ENCODE measurements at regions of chr1 and their contacts with region 1.

Region 1: DNA sequence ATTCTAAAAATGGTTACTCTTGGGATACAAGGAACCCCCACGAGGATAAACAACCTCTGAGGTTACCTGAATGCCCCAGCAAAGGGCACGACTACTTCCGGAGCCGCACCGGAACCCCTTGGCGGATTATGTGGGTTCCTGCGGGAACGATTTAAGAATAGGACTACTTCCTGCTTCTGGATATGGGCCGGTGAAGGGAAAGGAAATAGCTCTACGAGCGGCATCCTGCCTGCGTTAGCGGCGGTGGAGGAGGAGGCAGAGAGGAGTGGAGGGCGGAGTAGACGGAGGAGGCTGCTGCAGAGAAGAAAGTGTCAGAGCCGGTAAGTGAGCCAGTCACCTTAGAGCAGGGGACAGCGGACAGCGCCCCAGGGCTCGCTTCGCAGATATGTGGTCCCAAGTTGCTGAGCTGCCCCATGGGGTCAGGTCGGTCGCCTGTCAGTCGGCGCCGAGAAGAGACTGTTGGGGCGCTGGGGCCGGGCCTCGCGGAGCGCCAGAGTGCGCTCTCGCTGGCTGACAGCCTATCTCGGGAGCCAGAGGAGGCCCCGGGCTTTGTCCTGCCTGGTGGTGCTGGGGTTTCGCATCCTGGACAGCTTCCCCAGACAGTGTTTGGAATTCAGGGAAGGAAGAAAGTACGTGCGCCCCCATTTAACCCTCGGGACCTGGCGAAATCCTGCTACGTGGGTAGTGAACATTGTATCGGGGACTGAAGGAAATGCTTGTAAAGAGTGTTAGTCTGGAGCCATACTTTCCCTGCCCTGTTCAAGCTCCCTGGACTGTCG is at the start of gene KLHL20:
- DNase-seq: peak; percentile 91
- H3K4me3 Mint-ChIP-seq: peak within 1 kb of the TSS; percentile 92
- H3K27ac Mint-ChIP-seq: peak within 1 kb of the TSS; percentile 87
- H3K4me1 Mint-ChIP-seq: peaks cover 9% of the 10 kb centered on the region
- H3K27me3 Mint-ChIP-seq: peaks cover 20% of the 10 kb centered on the region
- CTCF ChIP-seq: no peak
- total RNA-seq, gene KLHL20: 21.6 and 22.2 TPM in 2 replicates

Region 2: GRCh38 chr1:172809750-172810149 is 905.2 kb before region 1 on chr1:
- CTCF ChIA-PET with region 1: no interaction called
- intact Hi-C with region 1: no loop called
- DNase-seq: no peak
- H3K4me3 Mint-ChIP-seq: no peak overlapping the region
- H3K27ac Mint-ChIP-seq: no peak overlapping the region
- H3K4me1 Mint-ChIP-seq: no peaks in the 10 kb centered on the region
- H3K27me3 Mint-ChIP-seq: no peaks in the 10 kb centered on the region
- CTCF ChIP-seq: no peak

Region 3: GRCh38 chr1:173476664-173477285 is 238.2 kb before region 1 on chr1:
- CTCF ChIA-PET with region 1: interaction called, 3 read pairs
- intact Hi-C with region 1: loop called (anchors 5 kb)
- DNase-seq: peak; percentile 91
- H3K4me3 Mint-ChIP-seq: peak overlapping the region; percentile 84
- H3K27ac Mint-ChIP-seq: peak overlapping the region; percentile 63
- H3K4me1 Mint-ChIP-seq: peaks cover 49% of the 10 kb centered on the region
- H3K27me3 Mint-ChIP-seq: no peaks in the 10 kb centered on the region
- CTCF ChIP-seq: no peak

Region 4: GRCh38 chr1:173507205-173507846 is 207.6 kb before region 1 on chr1:
- CTCF ChIA-PET with region 1: interaction called, 3 read pairs
- intact Hi-C with region 1: loop called (anchors 10 kb)
- DNase-seq: peak; percentile 41
- H3K4me3 Mint-ChIP-seq: peak overlapping the region; percentile 37
- H3K27ac Mint-ChIP-seq: peak overlapping the region; percentile 40
- H3K4me1 Mint-ChIP-seq: peaks cover 32% of the 10 kb centered on the region
- H3K27me3 Mint-ChIP-seq: no peaks in the 10 kb centered on the region
- CTCF ChIP-seq: no peak